CD4-positive, alpha-beta T cell (primary cell): ENCODE measurements at regions of chr1 and their contacts with region 1.

Region 1: GRCh38 chr1:23098463-23099170 is 70.0 kb downstream of the LUZP1 start:
- DNase-seq: peak; percentile 44 to 85 (median 53)
- ATAC-seq: peak; percentile 66
- H3K4me3 ChIP-seq: no peak overlapping the region
- H3K4me3 Mint-ChIP-seq: peak overlapping the region; percentile 2
- H3K27ac ChIP-seq: no peak overlapping the region
- H3K27ac Mint-ChIP-seq: no peak overlapping the region
- H3K4me1 ChIP-seq: peaks cover 30% of the 10 kb centered on the region
- H3K4me1 Mint-ChIP-seq: peaks cover 48% of the 10 kb centered on the region
- H3K27me3 ChIP-seq: no peaks in the 10 kb centered on the region
- H3K27me3 Mint-ChIP-seq: no peaks in the 10 kb centered on the region
- CTCF ChIP-seq: peak; percentile 81

Region 2: GRCh38 chr1:23108918-23109533 is 10.4 kb after region 1 on chr1:
- CTCF ChIA-PET with region 1: interaction called, 16 read pairs
- POLR2A ChIA-PET with region 1: interaction called, 5 read pairs
- intact Hi-C with region 1: no loop called
- DNase-seq: peak in 2 of 14 experiments; percentile 19 to 37
- ATAC-seq: no peak
- H3K4me3 ChIP-seq: no peak overlapping the region
- H3K4me3 Mint-ChIP-seq: no peak overlapping the region
- H3K27ac ChIP-seq: peak overlapping the region in 1 of 2 donors; percentile 8
- H3K27ac Mint-ChIP-seq: peak overlapping the region; percentile 32
- H3K4me1 ChIP-seq: peaks cover 31% of the 10 kb centered on the region
- H3K4me1 Mint-ChIP-seq: peaks cover 37% of the 10 kb centered on the region
- H3K27me3 ChIP-seq: no peaks in the 10 kb centered on the region
- H3K27me3 Mint-ChIP-seq: no peaks in the 10 kb centered on the region
- CTCF ChIP-seq: no peak

Region 3: DNA sequence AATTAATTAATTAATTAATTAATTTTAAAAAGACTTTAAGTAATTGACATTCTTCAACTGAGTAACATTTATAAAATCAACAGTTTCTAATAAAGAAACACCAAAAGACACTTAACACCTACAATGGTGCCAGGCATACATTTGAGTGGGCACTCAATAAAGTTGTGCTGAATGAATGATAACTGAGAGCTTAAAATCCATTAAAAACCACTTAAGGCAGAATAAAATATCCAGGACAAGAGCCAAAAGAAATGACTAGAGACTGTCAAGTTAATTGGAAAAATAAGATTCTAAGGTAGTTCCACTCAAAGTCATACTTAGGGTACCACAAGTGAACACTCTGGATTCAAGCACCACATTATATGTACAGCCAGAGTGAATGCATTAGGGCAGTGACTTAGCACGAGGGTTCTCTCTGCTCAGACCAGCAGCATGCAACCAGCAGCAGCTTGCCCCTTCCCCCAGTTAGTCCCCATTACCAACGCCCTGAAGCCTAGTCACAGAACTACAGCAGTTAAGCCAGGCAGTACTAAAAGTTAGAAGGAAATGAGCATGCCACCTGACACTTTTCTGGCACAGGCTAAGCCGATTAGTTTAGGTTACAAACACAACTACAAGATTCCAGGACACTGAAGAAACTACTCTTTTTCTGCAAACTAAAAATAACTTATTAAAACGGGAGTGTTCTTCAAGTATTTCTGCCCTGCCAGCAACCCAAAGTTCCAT is 23.6 kb after region 1 on chr1:
- CTCF ChIA-PET with region 1: interaction called, 17 read pairs
- POLR2A ChIA-PET with region 1: interaction called, 18 read pairs
- intact Hi-C with region 1: no loop called
- DNase-seq: no peak
- ATAC-seq: no peak
- H3K4me3 ChIP-seq: no peak overlapping the region
- H3K4me3 Mint-ChIP-seq: no peak overlapping the region
- H3K27ac ChIP-seq: no peak overlapping the region
- H3K27ac Mint-ChIP-seq: no peak overlapping the region
- H3K4me1 ChIP-seq: peaks cover 40% of the 10 kb centered on the region
- H3K4me1 Mint-ChIP-seq: peaks cover 75% of the 10 kb centered on the region
- H3K27me3 ChIP-seq: no peaks in the 10 kb centered on the region
- H3K27me3 Mint-ChIP-seq: no peaks in the 10 kb centered on the region
- CTCF ChIP-seq: no peak

Region 4: DNA sequence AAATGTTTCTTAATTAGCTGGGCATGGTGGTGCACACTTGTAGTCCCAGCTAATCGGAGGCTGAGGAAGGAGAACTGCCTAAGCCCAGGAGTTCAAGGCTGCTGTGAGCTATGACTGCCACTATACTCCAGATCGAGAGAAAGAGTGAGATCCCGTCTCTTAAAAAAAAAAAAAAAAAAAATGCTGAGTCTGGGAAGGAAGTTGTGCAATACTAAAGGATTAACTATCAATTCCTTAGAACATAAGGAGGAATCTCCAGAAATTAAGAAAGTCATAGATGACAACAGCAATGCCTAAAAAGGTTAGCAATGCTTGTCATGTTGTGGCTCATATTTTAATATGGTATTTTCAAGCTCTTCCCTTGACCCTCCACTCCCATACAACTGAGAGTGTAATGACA is 64.8 kb after region 1 on chr1:
- CTCF ChIA-PET with region 1: interaction called, 14 read pairs
- POLR2A ChIA-PET with region 1: interaction called, 6 read pairs
- intact Hi-C with region 1: loop called in 1 of 2 experiments (anchors 1 kb)
- DNase-seq: no peak
- ATAC-seq: no peak
- H3K4me3 ChIP-seq: no peak overlapping the region
- H3K4me3 Mint-ChIP-seq: no peak overlapping the region
- H3K27ac ChIP-seq: no peak overlapping the region
- H3K27ac Mint-ChIP-seq: no peak overlapping the region
- H3K4me1 ChIP-seq: peaks cover 12% of the 10 kb centered on the region
- H3K4me1 Mint-ChIP-seq: peaks cover 46% of the 10 kb centered on the region
- H3K27me3 ChIP-seq: no peaks in the 10 kb centered on the region
- H3K27me3 Mint-ChIP-seq: no peaks in the 10 kb centered on the region
- CTCF ChIP-seq: no peak

Region 5: GRCh38 chr1:23168457-23169194 is 70.0 kb after region 1 on chr1 and contains the start of gene LUZP1:
- CTCF ChIA-PET with region 1: interaction called, 14 read pairs
- POLR2A ChIA-PET with region 1: interaction called, 6 read pairs
- intact Hi-C with region 1: loop called in 1 of 2 experiments (anchors 1 kb)
- DNase-seq: peak; percentile 80 to 95 (median 83)
- ATAC-seq: peak; percentile 90
- H3K4me3 ChIP-seq: peak within 1 kb of the TSS; percentile 87
- H3K4me3 Mint-ChIP-seq: peak within 1 kb of the TSS; percentile 97
- H3K27ac ChIP-seq: peak within 1 kb of the TSS; percentile 68 to 74
- H3K27ac Mint-ChIP-seq: peak within 1 kb of the TSS; percentile 79
- H3K4me1 ChIP-seq: peaks cover 25% of the 10 kb centered on the region
- H3K4me1 Mint-ChIP-seq: peaks cover 46% of the 10 kb centered on the region
- H3K27me3 ChIP-seq: no peaks in the 10 kb centered on the region
- H3K27me3 Mint-ChIP-seq: no peaks in the 10 kb centered on the region
- CTCF ChIP-seq: no peak
- total RNA-seq, gene LUZP1: 20.1 to 23.7 TPM

Region 6: DNA sequence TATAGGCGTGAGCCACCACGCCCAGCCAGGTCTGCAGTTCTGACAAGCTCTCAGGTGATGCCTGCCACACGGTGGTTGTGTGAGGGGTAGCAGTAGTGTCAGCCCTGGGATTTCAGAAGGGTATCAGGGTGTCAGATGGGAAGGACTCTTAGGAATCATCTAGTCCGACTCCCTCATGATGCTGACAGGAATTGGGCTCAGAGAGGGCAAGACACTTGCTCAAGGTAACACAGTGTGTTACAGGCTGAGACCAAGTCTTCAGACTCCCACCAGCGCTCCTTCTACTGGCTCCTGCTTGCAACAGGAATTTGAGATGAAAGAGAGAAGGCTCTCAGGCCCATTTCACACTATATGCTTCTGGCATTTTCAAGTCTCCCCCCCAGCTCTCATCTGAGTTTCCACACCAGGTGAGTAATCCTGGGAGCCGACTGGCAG is 111.8 kb after region 1 on chr1:
- CTCF ChIA-PET with region 1: no interaction called
- POLR2A ChIA-PET with region 1: no interaction called
- intact Hi-C with region 1: no loop called
- DNase-seq: no peak
- ATAC-seq: no peak
- H3K4me3 ChIP-seq: no peak overlapping the region
- H3K4me3 Mint-ChIP-seq: no peak overlapping the region
- H3K27ac ChIP-seq: no peak overlapping the region
- H3K27ac Mint-ChIP-seq: no peak overlapping the region
- H3K4me1 ChIP-seq: peaks cover 3% of the 10 kb centered on the region
- H3K4me1 Mint-ChIP-seq: no peaks in the 10 kb centered on the region
- H3K27me3 ChIP-seq: peaks cover 18 to 32% of the 10 kb centered on the region in 2 experiments
- H3K27me3 Mint-ChIP-seq: peaks cover 49% of the 10 kb centered on the region
- CTCF ChIP-seq: no peak

Region 7: DNA sequence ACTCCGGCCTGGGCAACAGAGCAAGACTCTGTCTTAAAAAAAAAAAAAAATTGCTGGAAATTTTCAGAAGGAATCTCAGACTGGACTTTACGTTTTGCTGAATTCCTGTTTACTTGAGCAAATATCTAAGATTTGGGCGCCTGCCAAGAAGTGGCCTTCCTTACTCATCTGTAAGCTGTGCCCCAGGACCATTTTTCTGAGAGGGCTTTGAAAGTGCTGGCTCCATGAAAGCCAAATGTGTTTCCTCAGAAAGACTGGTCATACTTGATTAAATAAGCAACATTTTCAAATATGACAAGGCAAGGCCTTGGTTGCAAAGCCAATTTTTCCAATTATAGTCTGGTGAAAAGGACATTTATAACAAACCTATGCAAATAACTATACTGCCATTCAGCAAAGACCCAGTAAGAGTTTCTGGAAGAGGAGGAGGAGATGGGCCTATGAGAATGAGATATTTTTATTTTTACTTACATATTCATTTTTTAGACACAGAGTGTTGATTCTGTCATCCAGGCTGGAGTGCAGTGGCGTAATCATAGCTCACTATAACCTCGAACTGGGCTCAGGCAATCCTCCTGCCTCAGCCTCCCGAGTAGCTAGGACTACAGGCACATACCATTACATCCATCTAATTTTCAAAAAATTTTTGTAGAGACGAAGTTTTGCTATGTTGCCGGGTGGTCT is 175.0 kb after region 1 on chr1:
- CTCF ChIA-PET with region 1: no interaction called
- POLR2A ChIA-PET with region 1: no interaction called
- intact Hi-C with region 1: loop called in 1 of 2 experiments (anchors 10 kb)
- DNase-seq: no peak
- ATAC-seq: no peak
- H3K4me3 ChIP-seq: no peak overlapping the region
- H3K4me3 Mint-ChIP-seq: no peak overlapping the region
- H3K27ac ChIP-seq: no peak overlapping the region
- H3K27ac Mint-ChIP-seq: no peak overlapping the region
- H3K4me1 ChIP-seq: no peaks in the 10 kb centered on the region
- H3K4me1 Mint-ChIP-seq: no peaks in the 10 kb centered on the region
- H3K27me3 ChIP-seq: peaks cover 11 to 23% of the 10 kb centered on the region in 2 experiments
- H3K27me3 Mint-ChIP-seq: peaks cover 41% of the 10 kb centered on the region
- CTCF ChIP-seq: no peak

Region 8: DNA sequence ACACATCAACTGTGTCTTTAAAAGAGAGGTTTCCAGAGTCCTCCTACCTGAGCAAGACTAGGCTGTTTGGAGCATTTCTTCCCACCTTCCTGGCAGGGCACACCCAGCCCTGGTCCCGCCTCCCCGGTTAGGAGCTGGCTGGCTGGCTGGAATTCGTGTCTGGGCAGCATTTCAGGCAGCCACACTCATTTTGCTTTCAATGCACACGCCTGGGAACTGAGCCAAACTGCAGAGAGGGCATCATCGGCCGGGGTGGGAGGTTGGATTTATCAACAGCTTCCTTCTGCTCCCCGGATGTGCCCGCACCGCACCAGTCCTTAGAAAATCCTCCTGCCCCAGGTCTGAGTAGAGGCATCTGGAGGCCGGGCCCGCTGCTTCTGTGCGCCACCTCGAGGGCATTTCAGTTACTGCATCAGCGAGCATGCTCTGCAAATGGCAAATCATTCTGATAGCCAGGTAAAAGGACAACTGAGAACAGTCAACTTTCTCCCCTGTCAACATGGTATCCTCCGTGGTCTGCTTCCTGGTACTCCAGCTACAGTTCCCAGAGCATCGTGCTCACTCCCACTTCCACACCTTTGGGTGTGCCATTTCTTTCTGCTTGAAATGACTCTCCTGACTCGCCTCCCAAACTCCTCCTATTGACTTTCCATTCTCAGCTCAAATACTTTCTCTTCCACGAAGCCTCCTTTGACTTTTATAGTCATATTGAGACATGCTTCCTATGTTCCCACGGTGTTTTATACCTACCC is 305.3 kb after region 1 on chr1:
- CTCF ChIA-PET with region 1: no interaction called
- POLR2A ChIA-PET with region 1: no interaction called
- intact Hi-C with region 1: loop called in 1 of 2 experiments (anchors 5 kb)
- DNase-seq: peak; percentile 70 to 88 (median 78)
- ATAC-seq: peak; percentile 98
- H3K4me3 ChIP-seq: no peak overlapping the region
- H3K4me3 Mint-ChIP-seq: no peak overlapping the region
- H3K27ac ChIP-seq: no peak overlapping the region
- H3K27ac Mint-ChIP-seq: no peak overlapping the region
- H3K4me1 ChIP-seq: peaks cover 12% of the 10 kb centered on the region
- H3K4me1 Mint-ChIP-seq: peaks cover 10% of the 10 kb centered on the region
- H3K27me3 ChIP-seq: no peaks in the 10 kb centered on the region
- H3K27me3 Mint-ChIP-seq: no peaks in the 10 kb centered on the region
- CTCF ChIP-seq: peak; percentile 96